AG04449 (cell line): ENCODE measurements at regions of chr19 and their contacts with region 1.

Region 1: GRCh38 chr19:49097455-49098288 is 12.4 kb downstream of the SNRNP70 start:
- DNase-seq: peak; percentile 17
- H3K4me3 ChIP-seq: no peak overlapping the region
- CTCF ChIP-seq: peak; percentile 95

Region 2: DNA sequence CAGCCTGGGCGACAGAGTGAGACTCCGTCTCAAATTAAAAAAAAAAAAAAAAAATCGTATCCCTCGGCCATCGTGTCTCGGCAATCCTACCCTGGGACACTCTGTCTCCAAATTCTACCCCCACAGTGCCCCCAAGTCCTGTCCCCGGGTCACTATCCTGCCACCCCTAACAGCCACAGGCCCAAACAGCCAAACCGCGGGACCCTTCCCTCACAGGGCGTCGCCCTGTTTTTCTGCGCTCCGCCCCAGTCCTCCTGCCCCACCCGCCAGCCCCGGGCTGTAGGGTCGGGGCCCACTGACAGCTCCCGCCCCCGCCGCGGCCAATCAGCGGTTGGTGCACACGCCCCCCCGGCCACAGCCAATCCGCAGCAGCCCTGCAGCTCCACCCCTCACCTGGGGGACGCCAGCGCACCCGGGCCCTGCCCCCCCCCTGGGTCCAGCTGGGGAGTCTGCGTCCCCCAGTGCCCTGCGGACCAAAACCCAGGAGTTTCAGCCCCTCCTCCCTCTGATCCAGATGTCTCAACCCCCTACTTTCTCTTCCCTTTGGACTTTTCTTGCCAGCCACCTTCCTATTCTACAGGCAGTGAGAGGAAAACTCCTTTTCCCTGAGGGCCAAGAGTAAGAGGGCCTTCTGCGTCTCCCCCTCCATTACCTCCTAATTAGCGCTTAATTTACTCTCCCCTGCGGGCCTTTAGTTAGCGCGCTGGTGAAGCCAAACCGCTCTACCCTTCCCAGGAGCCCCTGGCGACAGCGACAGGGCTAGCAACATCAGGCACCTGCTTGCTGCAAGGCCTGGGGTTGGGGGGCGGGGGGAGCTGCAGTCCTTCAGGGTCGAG is 285.4 kb before region 1 on chr19:
- CTCF ChIA-PET with region 1: no interaction called
- POLR2A ChIA-PET with region 1: no interaction called
- DNase-seq: no peak
- H3K4me3 ChIP-seq: peak overlapping the region; percentile 72
- CTCF ChIP-seq: no peak

Region 3: GRCh38 chr19:48965040-48965805 is 132.4 kb before region 1 on chr19 and contains the start of gene FTL:
- CTCF ChIA-PET with region 1: no interaction called
- POLR2A ChIA-PET with region 1: no interaction called
- DNase-seq: peak; percentile 64
- H3K4me3 ChIP-seq: peak within 1 kb of the TSS; percentile 99
- CTCF ChIP-seq: no peak

Region 4: DNA sequence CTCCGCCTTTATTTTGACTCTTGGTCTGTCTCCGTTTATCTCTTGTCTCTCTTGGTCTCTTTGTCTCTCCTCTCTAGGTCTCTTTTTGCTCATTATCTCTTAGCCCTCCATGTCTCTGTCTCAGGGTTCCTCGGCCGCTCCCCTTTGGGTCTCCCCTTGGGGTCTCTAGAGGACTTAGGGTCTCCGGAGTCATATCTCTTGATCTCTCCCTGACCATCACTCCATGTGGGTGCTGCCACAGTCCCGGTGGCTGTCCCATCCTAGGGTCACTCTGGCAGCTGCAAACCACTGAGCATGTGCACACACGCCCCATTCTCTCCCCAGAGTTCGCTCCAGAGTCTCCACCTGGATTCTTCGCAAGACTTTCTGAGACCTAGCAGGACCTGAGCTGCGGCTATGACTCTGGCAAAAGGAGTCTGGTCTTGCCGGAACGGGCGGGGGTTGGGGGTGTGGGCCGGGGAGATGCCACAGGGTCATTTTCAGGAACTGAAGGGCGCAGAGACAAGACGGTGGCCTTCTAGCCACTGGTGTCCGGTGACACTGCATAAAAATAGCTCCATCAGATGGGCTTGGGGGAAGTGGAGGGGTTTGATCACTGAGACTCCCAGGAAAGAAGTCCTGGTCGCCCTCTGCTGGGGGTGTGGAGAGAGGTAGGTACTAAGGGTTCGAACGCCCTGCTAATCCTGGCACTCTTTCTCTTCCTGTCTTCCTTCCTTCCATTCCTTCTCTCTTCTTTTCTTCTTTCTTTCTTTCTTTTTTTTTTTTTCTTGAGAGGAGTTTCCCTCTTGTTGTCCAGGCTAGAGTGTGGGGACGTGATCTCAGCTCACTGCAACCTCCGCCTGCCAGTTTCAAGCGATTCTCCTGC is 23.9 kb before region 1 on chr19:
- CTCF ChIA-PET with region 1: interaction called, 10 read pairs
- POLR2A ChIA-PET with region 1: no interaction called
- DNase-seq: no peak
- H3K4me3 ChIP-seq: no peak overlapping the region
- CTCF ChIP-seq: peak; percentile 34

Region 5: DNA sequence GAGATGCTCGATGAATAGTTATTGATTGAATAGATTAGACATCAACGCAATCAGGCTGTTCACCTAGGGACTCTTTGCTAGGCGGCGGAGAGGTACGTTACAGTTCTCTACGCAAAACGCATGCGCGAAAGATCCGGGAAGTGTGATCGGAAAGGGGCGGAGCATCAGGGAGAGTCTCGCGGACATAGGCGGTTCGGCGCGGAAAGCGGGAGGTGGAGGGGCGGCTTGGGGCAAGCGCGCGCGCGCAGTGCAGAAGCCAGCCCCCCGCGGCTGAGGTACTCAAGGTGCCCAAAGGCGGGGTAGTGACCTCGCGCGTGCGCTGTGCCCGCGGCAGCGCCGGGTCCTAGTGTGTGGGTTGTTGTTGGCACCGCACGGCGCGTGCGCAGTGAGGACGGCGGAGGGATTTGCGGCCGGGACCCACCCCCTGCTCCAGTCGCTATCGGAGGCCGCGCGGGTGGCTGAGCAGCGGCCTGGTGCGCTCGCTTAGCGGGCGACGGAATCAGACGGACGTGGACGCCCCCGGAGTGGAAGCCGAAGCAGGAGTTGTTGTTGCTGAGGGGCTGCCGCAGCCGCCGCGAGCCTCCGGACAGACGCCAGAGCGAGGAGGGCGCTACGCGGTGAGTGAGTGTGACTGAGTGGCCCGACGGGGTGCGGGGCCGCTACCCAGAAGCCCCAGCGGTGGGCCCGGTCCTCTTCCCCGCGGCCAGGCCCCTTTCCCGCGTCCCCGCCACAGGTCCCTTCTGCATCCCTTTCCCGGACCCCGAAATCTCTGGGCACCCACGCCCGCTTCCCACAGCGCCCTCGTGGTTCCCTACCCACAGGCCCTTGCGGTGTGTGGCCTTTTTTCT is 12.4 kb before region 1 on chr19 and contains the start of gene SNRNP70:
- CTCF ChIA-PET with region 1: interaction called, 76 read pairs
- POLR2A ChIA-PET with region 1: interaction called, 7 read pairs
- DNase-seq: peak; percentile 95
- H3K4me3 ChIP-seq: peak within 1 kb of the TSS; percentile 95
- CTCF ChIP-seq: no peak

Region 6: DNA sequence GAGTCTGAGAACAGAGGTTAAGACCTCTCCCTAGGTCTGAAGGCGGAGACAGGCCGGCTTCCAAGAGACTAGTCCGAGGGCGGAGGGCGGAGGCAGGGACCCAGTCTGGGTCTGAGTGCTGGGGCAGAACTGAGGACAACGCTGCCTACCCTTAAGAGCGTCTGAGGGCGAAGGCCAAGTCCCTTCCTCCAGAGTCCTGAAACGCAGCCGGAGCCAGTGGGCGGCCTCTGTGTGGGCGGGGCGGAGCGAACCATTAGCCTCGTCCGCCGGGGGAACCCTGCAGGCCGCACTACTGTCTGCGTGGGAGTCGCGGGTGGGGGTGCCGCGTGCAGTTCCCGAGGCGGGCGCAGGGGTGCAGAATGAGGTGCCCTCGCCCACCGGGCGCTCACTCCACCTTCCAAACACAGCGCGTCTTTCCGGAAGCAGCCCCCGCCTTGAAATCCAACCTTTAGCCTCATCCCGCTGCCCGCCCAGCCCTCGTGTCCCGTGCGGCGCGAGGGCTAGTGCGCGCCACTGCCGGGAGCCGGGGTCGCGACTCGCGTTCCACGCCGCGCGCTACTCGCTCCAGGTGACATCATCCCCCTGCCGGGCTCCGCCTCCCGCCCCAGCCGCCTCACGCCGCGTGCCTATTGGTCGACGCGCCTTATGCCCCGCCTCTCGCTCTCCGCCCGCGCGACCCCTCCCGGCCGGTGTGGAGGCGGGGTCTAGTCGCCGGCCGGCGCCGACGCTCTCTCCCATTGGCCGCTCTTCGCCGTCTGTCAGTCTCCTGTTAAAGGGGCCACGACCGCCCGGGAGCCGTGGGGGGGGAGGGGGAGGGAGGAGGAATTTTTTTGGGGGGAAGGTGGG is 21.1 kb after region 1 on chr19 and contains the start of gene C19orf73:
- CTCF ChIA-PET with region 1: interaction called, 58 read pairs
- POLR2A ChIA-PET with region 1: no interaction called
- DNase-seq: peak; percentile 33
- H3K4me3 ChIP-seq: peak within 1 kb of the TSS; percentile 77
- CTCF ChIP-seq: peak; percentile 6

Region 7: GRCh38 chr19:49182848-49183344 is 85.2 kb after region 1 on chr19:
- CTCF ChIA-PET with region 1: interaction called, 16 read pairs
- POLR2A ChIA-PET with region 1: no interaction called
- DNase-seq: no peak
- H3K4me3 ChIP-seq: no peak overlapping the region
- CTCF ChIP-seq: no peak